Dendritic cell treated with granulocyte-macrophage colony-stimulating factor and Interleukin-4, amounts not matched to agents 40 ng/mL and 50 ng/mL, for 4 days (primary cell): ENCODE measurements at regions of chr1 and their contacts with region 1.

Region 1: GRCh38 chr1:15617175-15617880 is at the start of gene DDI2:
- H3K4me3 Mint-ChIP-seq: peak within 1 kb of the TSS; percentile 73
- H3K27ac Mint-ChIP-seq: peak within 1 kb of the TSS; percentile 95
- H3K4me1 Mint-ChIP-seq: peaks cover 50% of the 10 kb centered on the region
- H3K27me3 Mint-ChIP-seq: peaks cover 3% of the 10 kb centered on the region

Region 2: GRCh38 chr1:15526490-15527339 is 90.6 kb before region 1 on chr1 and contains the start of gene DNAJC16:
- intact Hi-C with region 1: loop called (anchors 5 kb)
- H3K4me3 Mint-ChIP-seq: peak within 1 kb of the TSS; percentile 84
- H3K27ac Mint-ChIP-seq: peak within 1 kb of the TSS; percentile 96
- H3K4me1 Mint-ChIP-seq: peaks cover 53% of the 10 kb centered on the region
- H3K27me3 Mint-ChIP-seq: no peaks in the 10 kb centered on the region

Region 3: GRCh38 chr1:15603050-15603965 is 14.0 kb before region 1 on chr1:
- intact Hi-C with region 1: loop called (anchors 1 kb)
- H3K4me3 Mint-ChIP-seq: peak overlapping the region; percentile 82
- H3K27ac Mint-ChIP-seq: peak overlapping the region; percentile 87
- H3K4me1 Mint-ChIP-seq: peaks cover 16% of the 10 kb centered on the region
- H3K27me3 Mint-ChIP-seq: no peaks in the 10 kb centered on the region